ENCODE measurements at regions of chr1 and their contacts with region 1.

Region 1: GRCh38 chr1:150363426-150364230 is at the start of gene RPRD2:
- DNase-seq: peak; percentile 99
- ATAC-seq: peak; percentile 95
- H3K4me3 ChIP-seq: peak within 1 kb of the TSS; percentile 75 to 97 (median 95)
- H3K27ac ChIP-seq: peak within 1 kb of the TSS; percentile 100
- H3K4me1 ChIP-seq: peaks cover 36% of the 10 kb centered on the region
- H3K27me3 ChIP-seq: no peaks in the 10 kb centered on the region; a peak in 1 of 5 replicates
- CTCF ChIP-seq: no peak
- EP300 ChIP-seq: no peak
- POLR2A ChIP-seq: peak; percentile 53 to 76
- RAD21 ChIP-seq: no peak; the same call in 1 of the 2 replicates
- total RNA-seq, gene RPRD2: 8.0 and 12.2 TPM in 2 replicates

Region 2: GRCh38 chr1:150268705-150269403 is 94.8 kb before region 1 on chr1 and contains the start of gene APH1A:
- CTCF ChIA-PET with region 1: no interaction called
- POLR2A ChIA-PET with region 1: interaction called, 10 read pairs
- in situ Hi-C with region 1: no loop called
- intact Hi-C with region 1: no loop called
- DNase-seq: peak; percentile 92
- ATAC-seq: peak; percentile 99
- H3K4me3 ChIP-seq: peak within 1 kb of the TSS; percentile 88
- H3K27ac ChIP-seq: peak within 1 kb of the TSS; percentile 66
- H3K4me1 ChIP-seq: peaks cover 24% of the 10 kb centered on the region
- H3K27me3 ChIP-seq: no peaks in the 10 kb centered on the region
- CTCF ChIP-seq: peak; percentile 23; the same call in 1 of the 2 replicates
- EP300 ChIP-seq: no peak
- POLR2A ChIP-seq: peak; percentile 45 to 53; a peak in 3 of 4 replicates
- RAD21 ChIP-seq: no peak
- total RNA-seq, gene APH1A: 87.1 and 130 TPM in 2 replicates

Region 3: DNA sequence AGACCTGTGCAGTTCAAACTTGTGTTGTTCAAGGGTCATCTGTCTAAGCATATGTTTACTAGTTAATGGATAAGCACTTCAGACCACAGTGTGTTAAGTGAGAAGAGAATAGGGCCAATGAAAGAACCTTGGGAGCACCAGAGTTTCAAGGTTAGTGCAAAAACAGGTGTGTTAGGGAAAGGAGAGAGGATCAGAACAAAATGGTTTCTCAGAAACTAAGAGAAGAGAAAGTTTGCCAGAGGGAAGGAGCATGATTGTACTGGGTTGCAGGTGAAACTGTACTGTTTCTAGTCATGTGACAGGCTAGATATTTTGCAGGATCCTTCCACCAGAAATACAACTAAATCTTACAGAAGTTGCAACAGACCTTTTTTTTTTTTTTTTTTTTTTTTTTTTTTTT is 23.6 kb after region 1 on chr1:
- CTCF ChIA-PET with region 1: no interaction called
- POLR2A ChIA-PET with region 1: interaction called, 21 read pairs
- in situ Hi-C with region 1: no loop called
- intact Hi-C with region 1: no loop called
- DNase-seq: peak; percentile 81
- ATAC-seq: peak; percentile 96
- H3K4me3 ChIP-seq: peak overlapping the region; percentile 33 to 43 (median 39)
- H3K27ac ChIP-seq: peak overlapping the region; percentile 71
- H3K4me1 ChIP-seq: peaks cover 70% of the 10 kb centered on the region
- H3K27me3 ChIP-seq: no peaks in the 10 kb centered on the region
- CTCF ChIP-seq: no peak
- EP300 ChIP-seq: peak in 1 of 2 experiments; percentile 39; a peak in 1 of 4 replicates
- POLR2A ChIP-seq: no peak
- RAD21 ChIP-seq: no peak

Region 4: DNA sequence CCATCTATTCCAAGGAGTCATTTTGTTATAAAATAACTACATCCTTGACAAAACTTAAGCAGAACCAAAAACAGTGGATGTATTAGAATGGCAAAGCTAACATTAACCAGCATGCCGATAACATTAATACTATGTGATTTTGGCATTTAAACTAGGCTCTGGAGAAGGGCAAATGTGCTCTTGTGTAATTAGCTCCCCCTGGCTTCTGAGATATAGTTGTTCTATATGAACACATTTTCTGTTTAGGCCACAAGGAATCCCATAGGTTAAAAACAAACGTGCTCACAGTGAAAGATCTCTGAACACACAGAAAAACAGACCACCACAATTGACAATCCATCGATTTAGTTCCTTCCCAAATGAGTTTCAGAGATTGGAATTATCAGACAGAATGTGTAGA is 66.2 kb after region 1 on chr1:
- CTCF ChIA-PET with region 1: no interaction called
- POLR2A ChIA-PET with region 1: interaction called, 5 read pairs
- in situ Hi-C with region 1: no loop called
- intact Hi-C with region 1: loop called (anchors 5 kb)
- DNase-seq: peak; percentile 57
- ATAC-seq: peak; percentile 64
- H3K4me3 ChIP-seq: no peak overlapping the region
- H3K27ac ChIP-seq: no peak overlapping the region
- H3K4me1 ChIP-seq: 0 out of 2 replicates have a peak, but pooled peaks cover 4% of the 10 kb centered on the region
- H3K27me3 ChIP-seq: no peaks in the 10 kb centered on the region
- CTCF ChIP-seq: peak; percentile 62
- EP300 ChIP-seq: no peak
- POLR2A ChIP-seq: no peak
- RAD21 ChIP-seq: peak; percentile 35; the same call in 1 of the 2 replicates

Region 5: GRCh38 chr1:150529017-150529416 is 165.4 kb after region 1 on chr1:
- CTCF ChIA-PET with region 1: no interaction called
- POLR2A ChIA-PET with region 1: interaction called, 11 read pairs
- in situ Hi-C with region 1: no loop called
- intact Hi-C with region 1: no loop called
- DNase-seq: no peak
- ATAC-seq: no peak
- H3K4me3 ChIP-seq: peak overlapping the region in 2 of 3 experiments; percentile 3 to 21; a peak in 1 of 6 replicates
- H3K27ac ChIP-seq: no peak overlapping the region
- H3K4me1 ChIP-seq: peaks cover 52% of the 10 kb centered on the region
- H3K27me3 ChIP-seq: no peaks in the 10 kb centered on the region
- CTCF ChIP-seq: no peak
- EP300 ChIP-seq: no peak
- POLR2A ChIP-seq: no peak
- RAD21 ChIP-seq: no peak